ENCODE measurements at regions of chr1 and their contacts with region 1.

Region 1: GRCh38 chr1:89987170-89987819 is 7.6 kb upstream of the ZNF326 start:
- DNase-seq: no peak
- H3K4me3 ChIP-seq: no peak overlapping the region
- H3K27ac ChIP-seq: no peak overlapping the region
- H3K4me1 ChIP-seq: peaks cover 0 to 5% (median 0%) of the 10 kb centered on the region in 4 experiments; a peak in 1 of 7 replicates
- H3K27me3 ChIP-seq: no peaks in the 10 kb centered on the region
- CTCF ChIP-seq: peak in 2 of 3 experiments; percentile 73 to 91; a peak in 3 of 4 replicates
- EP300 ChIP-seq: no peak
- POLR2A ChIP-seq: no peak
- RAD21 ChIP-seq: peak; percentile 92 to 97

Region 2: GRCh38 chr1:89780721-89781120 is 206.6 kb before region 1 on chr1:
- CTCF ChIA-PET with region 1: interaction called, 27 read pairs
- POLR2A ChIA-PET with region 1: no interaction called
- DNase-seq: no peak
- H3K4me3 ChIP-seq: no peak overlapping the region
- H3K27ac ChIP-seq: no peak overlapping the region
- H3K4me1 ChIP-seq: no peaks in the 10 kb centered on the region
- H3K27me3 ChIP-seq: no peaks in the 10 kb centered on the region
- CTCF ChIP-seq: peak in 1 of 3 experiments; percentile 7; a peak in 2 of 4 replicates
- EP300 ChIP-seq: no peak
- POLR2A ChIP-seq: no peak
- RAD21 ChIP-seq: peak; percentile 48

Region 3: DNA sequence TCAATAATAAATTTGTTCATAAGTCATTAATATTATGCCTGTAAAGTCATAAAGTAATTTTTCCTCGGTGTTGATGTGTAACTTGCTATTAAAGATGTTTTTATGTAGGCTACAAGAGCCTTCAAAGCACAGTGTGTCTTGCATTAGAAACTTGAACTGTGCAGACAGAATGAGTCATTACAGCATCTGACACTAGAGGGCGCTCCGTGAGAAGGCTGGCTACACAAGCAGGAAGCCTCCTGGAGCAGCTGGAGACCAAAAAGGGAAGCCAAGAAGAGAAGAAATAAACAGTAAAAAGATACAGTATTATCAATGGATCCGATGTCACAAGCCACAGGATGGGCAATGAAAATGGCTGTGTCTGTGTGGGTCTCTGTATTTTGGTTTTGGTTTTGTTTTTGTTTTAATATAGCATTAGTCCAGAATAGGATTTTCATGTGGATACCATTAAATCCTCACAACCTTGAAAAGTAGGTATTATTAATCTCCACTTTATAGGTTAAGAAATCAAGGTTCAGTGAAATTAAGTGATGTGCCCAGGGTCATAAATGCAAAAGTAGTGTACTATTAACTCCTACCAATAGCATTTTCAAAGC is 182.6 kb before region 1 on chr1:
- CTCF ChIA-PET with region 1: interaction called, 78 read pairs
- POLR2A ChIA-PET with region 1: no interaction called
- DNase-seq: peak in 1 of 2 experiments; percentile 96
- H3K4me3 ChIP-seq: no peak overlapping the region
- H3K27ac ChIP-seq: no peak overlapping the region
- H3K4me1 ChIP-seq: peaks cover 6 to 22% (median 10%) of the 10 kb centered on the region in 4 experiments; a peak in 5 of 7 replicates
- H3K27me3 ChIP-seq: no peaks in the 10 kb centered on the region; a peak in 4 of 7 replicates
- CTCF ChIP-seq: peak; percentile 69 to 93 (median 88)
- EP300 ChIP-seq: no peak
- POLR2A ChIP-seq: no peak
- RAD21 ChIP-seq: peak; percentile 98

Region 4: DNA sequence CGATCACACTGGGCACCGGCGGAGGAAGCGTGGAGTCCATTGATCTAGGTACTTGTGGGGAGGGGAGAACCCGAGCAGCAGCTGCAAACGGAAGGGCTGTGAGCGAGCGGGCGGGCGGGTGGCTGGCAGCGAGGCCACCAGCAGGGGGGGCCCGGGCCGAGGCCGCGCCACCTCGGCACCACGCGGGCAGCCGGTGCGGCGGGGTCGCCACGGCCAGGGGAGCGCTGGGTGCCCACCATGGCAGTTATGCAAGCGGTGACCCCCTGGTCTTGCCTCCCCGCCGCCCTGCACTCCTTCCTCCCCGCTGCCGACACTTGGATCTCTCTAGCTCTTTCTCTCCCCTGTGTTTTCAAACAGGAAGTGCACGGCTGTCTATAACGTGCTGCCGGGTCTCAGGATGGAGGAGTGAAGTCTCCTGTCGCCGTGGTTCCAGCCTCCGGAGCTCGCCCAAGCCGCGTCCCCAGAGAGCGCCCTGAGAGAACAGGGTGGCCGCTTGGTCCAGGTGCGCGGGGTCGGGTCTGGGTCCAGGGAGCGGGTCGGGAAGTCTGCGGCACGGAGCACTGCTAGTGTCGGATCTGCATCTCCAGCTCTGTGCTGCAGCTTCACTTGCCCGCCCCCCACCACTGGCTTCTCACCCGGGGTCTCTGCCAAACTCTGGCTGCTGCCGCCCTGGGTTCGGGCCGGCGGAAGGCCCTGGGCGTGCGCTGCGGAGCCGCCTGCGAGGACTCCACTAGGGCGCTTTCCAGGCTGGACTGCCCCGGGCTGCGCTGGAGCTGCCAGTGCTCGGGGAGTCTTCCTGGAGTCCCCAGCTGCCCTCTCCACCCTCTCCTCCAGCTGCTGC is 143.8 kb before region 1 on chr1:
- CTCF ChIA-PET with region 1: interaction called, 14 read pairs
- POLR2A ChIA-PET with region 1: no interaction called
- DNase-seq: peak in 1 of 2 experiments; percentile 79
- H3K4me3 ChIP-seq: peak overlapping the region; percentile 46 to 74 (median 64)
- H3K27ac ChIP-seq: peak overlapping the region; percentile 72; the same call in 1 of the 2 replicates
- H3K4me1 ChIP-seq: peaks cover 2 to 15% (median 11%) of the 10 kb centered on the region in 4 experiments; a peak in 6 of 7 replicates
- H3K27me3 ChIP-seq: no peaks in the 10 kb centered on the region
- CTCF ChIP-seq: peak; percentile 51 to 69 (median 54); a peak in 3 of 4 replicates
- EP300 ChIP-seq: no peak
- POLR2A ChIP-seq: peak in 1 of 2 experiments; percentile 58; a peak in 2 of 3 replicates
- RAD21 ChIP-seq: peak; percentile 26 to 60; a peak in 3 of 4 replicates

Region 5: DNA sequence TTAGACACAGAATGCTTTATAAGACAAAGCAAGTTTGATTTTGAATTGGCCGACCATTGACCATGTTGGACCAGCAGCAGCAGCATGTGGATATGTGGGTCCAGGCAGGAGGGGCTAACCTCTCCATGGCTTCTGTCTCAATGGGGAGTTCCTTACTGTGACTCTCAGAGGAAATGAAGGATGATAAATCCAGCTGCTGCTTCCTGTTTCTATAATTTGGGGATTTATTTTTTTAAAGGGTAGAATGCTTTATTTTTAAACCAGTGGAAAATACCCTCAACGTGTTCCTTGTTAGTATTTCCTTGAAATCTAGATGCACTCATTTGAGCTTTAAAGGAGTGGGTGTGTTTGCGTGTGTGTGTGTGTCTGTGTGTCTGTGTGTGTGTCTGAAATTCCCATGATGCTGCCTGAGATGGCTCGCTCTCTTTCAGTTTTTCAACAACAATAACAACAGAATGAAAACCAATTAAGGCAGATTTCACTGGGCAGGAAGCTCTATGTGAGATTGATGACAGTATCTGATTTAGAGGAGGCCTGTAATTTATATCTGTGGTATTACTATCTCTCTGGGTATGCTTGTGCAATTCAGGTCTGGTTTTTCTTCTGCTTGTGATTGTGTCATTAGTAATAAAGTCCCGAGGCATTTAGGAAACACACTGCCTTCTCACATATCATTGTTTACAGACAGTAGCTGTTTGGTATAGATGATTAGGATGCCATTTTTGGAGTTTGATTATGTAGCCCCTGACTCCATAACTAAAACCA is 78.4 kb before region 1 on chr1:
- CTCF ChIA-PET with region 1: no interaction called
- POLR2A ChIA-PET with region 1: no interaction called
- DNase-seq: no peak
- H3K4me3 ChIP-seq: no peak overlapping the region
- H3K27ac ChIP-seq: no peak overlapping the region
- H3K4me1 ChIP-seq: peaks cover 15 to 40% (median 37%) of the 10 kb centered on the region in 4 experiments; a peak in 6 of 7 replicates
- H3K27me3 ChIP-seq: no peaks in the 10 kb centered on the region
- CTCF ChIP-seq: no peak
- EP300 ChIP-seq: no peak
- POLR2A ChIP-seq: no peak
- RAD21 ChIP-seq: no peak

Region 6: DNA sequence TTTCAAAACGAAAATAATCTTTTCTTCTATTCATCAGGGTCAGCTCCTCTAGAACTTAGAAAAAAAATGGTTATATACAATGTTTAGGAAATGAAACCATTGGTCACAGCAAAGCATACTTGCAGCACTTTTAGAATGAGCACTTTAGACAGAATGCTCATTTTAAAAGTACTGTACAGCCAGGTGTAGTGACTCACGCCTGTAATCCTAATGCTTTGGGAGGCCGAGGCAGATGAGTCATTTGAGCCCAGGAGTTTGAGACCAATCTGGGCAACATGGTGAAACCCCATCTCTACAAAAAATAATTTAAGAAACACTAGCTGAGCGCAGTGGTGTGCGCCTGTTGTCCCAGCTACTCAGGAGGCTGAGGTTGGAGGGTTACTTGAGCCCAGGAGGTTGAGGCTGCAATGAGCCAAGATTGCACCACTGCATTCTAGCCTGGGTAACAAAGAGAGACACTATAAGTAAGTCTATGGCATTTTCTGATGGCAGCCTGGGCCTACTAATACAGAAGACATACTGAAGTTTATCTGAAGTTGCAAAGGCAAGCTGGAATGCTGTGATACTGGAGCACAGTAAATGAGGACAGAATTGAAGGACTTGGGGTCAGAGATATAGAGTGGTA is 41.3 kb before region 1 on chr1:
- CTCF ChIA-PET with region 1: interaction called, 14 read pairs
- POLR2A ChIA-PET with region 1: no interaction called
- DNase-seq: no peak
- H3K4me3 ChIP-seq: no peak overlapping the region
- H3K27ac ChIP-seq: no peak overlapping the region
- H3K4me1 ChIP-seq: peaks cover 3 to 14% (median 11%) of the 10 kb centered on the region in 4 experiments; a peak in 4 of 7 replicates
- H3K27me3 ChIP-seq: no peaks in the 10 kb centered on the region; a peak in 1 of 7 replicates
- CTCF ChIP-seq: no peak
- EP300 ChIP-seq: no peak
- POLR2A ChIP-seq: no peak
- RAD21 ChIP-seq: no peak

Region 7: GRCh38 chr1:90133133-90133532 is 145.8 kb after region 1 on chr1:
- CTCF ChIA-PET with region 1: no interaction called
- POLR2A ChIA-PET with region 1: no interaction called
- DNase-seq: peak in 1 of 2 experiments; percentile 51
- H3K4me3 ChIP-seq: no peak overlapping the region
- H3K27ac ChIP-seq: no peak overlapping the region
- H3K4me1 ChIP-seq: no peaks in the 10 kb centered on the region
- H3K27me3 ChIP-seq: no peaks in the 10 kb centered on the region
- CTCF ChIP-seq: peak in 2 of 3 experiments; percentile 76 to 78; a peak in 3 of 4 replicates
- EP300 ChIP-seq: no peak
- POLR2A ChIP-seq: no peak
- RAD21 ChIP-seq: peak; percentile 79 to 88